ENCODE measurements at regions of chr6 and their contacts with region 1.

Region 1: GRCh38 chr6:11366183-11366933 is 133.9 kb upstream of the NEDD9 start:
- DNase-seq: peak; percentile 37
- H3K4me3 Mint-ChIP-seq: peak overlapping the region; percentile 34
- H3K27ac Mint-ChIP-seq: peak overlapping the region; percentile 67
- H3K4me1 Mint-ChIP-seq: peaks cover 88% of the 10 kb centered on the region
- H3K27me3 Mint-ChIP-seq: no peaks in the 10 kb centered on the region

Region 2: GRCh38 chr6:11232193-11232769 is 134.1 kb before region 1 on chr6 and contains the start of gene NEDD9:
- intact Hi-C with region 1: loop called (anchors 2 kb)
- DNase-seq: peak; percentile 94
- H3K4me3 Mint-ChIP-seq: peak within 1 kb of the TSS; percentile 93
- H3K27ac Mint-ChIP-seq: peak within 1 kb of the TSS; percentile 99
- H3K4me1 Mint-ChIP-seq: peaks cover 64% of the 10 kb centered on the region
- H3K27me3 Mint-ChIP-seq: no peaks in the 10 kb centered on the region
- total RNA-seq, gene NEDD9: 34.5 and 35.0 TPM in 2 replicates

Region 3: GRCh38 chr6:11330413-11330760 is 36.0 kb before region 1 on chr6:
- intact Hi-C with region 1: loop called (anchors 1 kb)
- DNase-seq: no peak
- H3K4me3 Mint-ChIP-seq: peak overlapping the region; percentile 13
- H3K27ac Mint-ChIP-seq: peak overlapping the region; percentile 85
- H3K4me1 Mint-ChIP-seq: peaks cover 66% of the 10 kb centered on the region
- H3K27me3 Mint-ChIP-seq: no peaks in the 10 kb centered on the region

Region 4: DNA sequence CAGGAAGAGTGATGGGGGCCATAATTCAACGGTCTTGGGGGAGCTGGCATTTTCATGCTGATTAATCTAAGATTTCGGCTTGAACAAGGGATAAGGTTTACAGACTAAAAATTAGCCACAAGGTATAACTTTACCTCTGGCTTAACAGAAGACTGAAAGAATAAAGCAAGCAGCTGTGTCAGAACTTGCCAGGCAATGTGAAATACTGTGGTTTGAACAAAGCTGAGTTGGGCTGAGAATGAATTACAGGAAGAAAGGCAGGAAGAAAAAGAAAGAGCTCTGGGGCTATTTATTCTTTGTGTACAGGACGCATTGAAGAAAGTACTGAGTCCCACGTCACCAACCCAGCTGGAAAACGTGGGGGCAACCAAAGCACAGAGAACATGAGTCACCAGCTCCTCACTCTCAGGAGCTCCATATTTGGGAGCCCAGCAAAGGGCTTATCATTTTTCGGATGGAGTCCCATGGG is 12.4 kb before region 1 on chr6:
- intact Hi-C with region 1: loop called (anchors 1 kb)
- DNase-seq: peak; percentile 44
- H3K4me3 Mint-ChIP-seq: peak overlapping the region; percentile 18
- H3K27ac Mint-ChIP-seq: peak overlapping the region; percentile 94
- H3K4me1 Mint-ChIP-seq: peaks cover 69% of the 10 kb centered on the region
- H3K27me3 Mint-ChIP-seq: no peaks in the 10 kb centered on the region

Region 5: DNA sequence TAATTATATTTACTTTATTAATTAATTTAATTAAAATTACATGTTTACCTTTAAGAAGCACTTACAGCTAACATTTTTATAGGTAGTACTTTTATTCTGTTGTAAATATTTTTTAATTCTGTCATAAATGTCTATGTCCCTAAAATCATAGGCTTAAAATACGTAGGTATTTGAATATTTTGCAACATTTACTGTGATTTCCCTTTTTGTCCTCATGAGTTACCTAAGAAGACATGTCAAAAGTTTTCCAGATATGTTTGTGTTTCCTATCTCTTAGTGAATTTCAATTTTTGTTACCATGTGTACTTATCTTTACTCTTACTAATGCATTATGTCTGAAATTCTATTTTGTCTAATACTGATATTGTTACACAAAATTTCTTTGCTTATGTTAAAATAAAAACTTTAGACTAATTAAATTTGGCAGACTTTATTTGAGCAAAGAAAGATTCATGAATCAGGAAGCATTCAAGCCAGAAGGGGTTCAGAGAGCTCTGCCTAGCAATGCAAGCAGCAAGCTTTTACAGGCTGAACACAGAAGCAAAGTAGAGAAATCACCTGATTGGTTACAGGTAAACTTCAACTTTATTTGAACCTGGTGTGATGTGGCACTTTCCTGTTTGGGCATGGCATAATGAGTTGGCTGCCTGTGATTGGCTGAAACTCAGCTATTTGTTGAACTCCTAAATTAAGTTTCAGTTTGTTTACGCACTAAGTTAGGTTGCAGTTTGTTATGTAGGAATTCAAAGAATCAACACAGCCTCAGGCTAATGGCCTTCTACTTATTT is 48.0 kb after region 1 on chr6:
- intact Hi-C with region 1: loop called (anchors 2 kb)
- DNase-seq: peak; percentile 24
- H3K4me3 Mint-ChIP-seq: no peak overlapping the region
- H3K27ac Mint-ChIP-seq: no peak overlapping the region
- H3K4me1 Mint-ChIP-seq: peaks cover 62% of the 10 kb centered on the region
- H3K27me3 Mint-ChIP-seq: no peaks in the 10 kb centered on the region

Region 6: GRCh38 chr6:11460001-11460668 is 93.8 kb after region 1 on chr6:
- intact Hi-C with region 1: loop called (anchors 2 kb)
- DNase-seq: no peak
- H3K4me3 Mint-ChIP-seq: peak overlapping the region; percentile 67
- H3K27ac Mint-ChIP-seq: peak overlapping the region; percentile 91
- H3K4me1 Mint-ChIP-seq: peaks cover 29% of the 10 kb centered on the region
- H3K27me3 Mint-ChIP-seq: peaks cover 2% of the 10 kb centered on the region